Left cardiac atrium (tissue), 4 donors: ENCODE measurements at regions of chr13 and their contacts with region 1.

Region 1: DNA sequence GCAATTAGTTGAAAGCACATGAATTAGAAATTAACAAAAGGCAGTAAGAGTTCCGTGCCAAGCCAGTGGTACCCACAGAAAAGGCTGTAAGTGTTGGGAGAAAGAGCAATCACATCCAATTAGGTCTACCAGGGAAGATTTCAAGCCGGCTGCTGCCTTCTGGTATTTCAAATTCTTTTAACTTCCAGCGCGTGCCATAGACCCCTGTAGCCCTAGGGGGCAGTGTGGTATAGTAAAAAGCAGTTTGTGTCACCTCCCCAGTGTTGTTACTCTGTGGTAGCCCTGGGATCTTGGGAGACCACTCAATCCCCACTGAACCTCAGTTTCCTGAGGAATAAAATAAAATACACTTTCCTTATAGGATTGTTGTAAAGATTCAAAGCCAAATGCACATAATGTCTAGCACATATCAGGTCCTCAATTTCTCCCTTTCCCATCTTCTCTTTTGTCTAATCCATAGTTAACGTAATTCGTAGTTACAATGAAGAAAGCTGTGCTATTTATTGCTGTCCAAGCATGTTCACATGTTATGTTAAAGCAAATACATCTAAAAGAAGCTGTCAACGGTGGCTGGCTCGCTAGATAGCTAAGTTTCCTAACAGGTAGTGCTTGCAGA is 230.2 kb downstream of the TDRD3 start:
- DNase-seq: no peak
- ATAC-seq: peak; percentile 53 to 61

Region 2: DNA sequence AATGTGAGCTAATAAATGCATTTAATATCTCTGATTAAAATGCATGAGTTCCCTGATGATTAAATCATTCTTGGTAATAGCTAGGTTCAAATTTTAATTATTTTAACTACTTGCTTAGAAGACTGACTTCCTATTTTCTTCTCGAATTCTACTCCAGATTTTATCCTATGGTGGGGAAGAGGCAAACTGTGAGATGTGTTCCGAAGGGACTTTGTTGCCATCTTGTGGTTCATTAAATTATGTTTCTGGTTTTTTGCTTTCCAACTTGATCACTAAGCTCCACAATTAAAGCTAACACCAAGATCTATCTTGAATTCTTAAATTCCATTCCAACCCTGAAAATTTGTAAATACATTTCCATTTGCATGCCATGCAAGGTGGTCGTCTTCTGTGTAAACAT is 1326.9 kb after region 1 on chr13:
- intact Hi-C with region 1: loop called in 1 of 2 experiments (anchors 5 kb)
- DNase-seq: no peak
- ATAC-seq: no peak